ENCODE measurements at regions of chr2 and their contacts with region 1.

Region 1: GRCh38 chr2:151251012-151251411 is 10.7 kb downstream of the RBM43 start:
- DNase-seq: no peak
- ATAC-seq: no peak
- H3K4me3 Mint-ChIP-seq: no peak overlapping the region
- H3K27ac Mint-ChIP-seq: no peak overlapping the region
- H3K4me1 Mint-ChIP-seq: peaks cover 5% of the 10 kb centered on the region
- H3K27me3 Mint-ChIP-seq: no peaks in the 10 kb centered on the region
- CTCF ChIP-seq: no peak

Region 2: DNA sequence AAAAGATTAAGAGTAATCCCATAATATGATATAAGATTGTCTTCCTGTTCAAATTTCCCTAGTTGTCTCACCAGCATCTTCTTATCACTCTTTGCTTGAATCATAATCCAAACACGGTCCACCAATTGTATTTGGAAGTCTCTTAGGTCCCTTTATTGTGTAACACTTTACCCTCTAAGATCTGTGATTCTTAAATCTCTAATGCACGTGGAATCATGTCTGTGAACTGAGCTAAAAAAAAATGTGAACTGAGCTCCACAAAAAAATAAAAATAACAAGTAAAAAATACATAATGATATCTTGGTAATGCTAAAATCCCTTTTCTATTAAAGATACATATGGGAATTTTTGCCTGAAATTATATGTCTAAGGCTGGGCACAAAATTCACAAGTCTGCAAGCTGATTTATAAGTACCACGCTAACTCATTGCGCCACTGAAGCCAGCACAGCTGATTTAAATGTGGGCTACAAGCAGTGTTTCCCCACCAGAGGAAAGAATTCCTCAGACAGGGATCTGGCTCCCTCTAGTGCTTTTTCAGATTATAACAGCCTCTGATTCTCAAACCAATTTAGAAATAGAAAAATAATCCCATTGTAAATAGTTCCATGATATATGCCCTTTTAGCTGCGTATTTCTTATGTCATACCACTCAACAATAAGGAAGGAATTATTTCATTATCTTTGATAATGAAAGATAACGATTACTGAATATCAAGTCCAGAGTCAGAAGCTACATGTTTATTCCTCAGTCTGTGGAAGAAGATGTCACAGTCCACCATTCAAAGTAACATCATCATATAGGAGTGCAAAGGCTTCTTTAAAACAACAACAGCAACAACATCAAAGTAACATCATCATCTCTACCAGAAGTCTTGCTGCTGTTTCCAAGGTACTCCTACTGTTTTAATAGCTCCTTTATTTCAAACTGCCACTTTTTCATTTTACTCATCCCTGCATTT is 12.2 kb before region 1 on chr2:
- CTCF ChIA-PET with region 1: interaction called, 11 read pairs
- POLR2A ChIA-PET with region 1: no interaction called
- intact Hi-C with region 1: no loop called
- DNase-seq: peak; percentile 59
- ATAC-seq: peak; percentile 82
- H3K4me3 Mint-ChIP-seq: no peak overlapping the region
- H3K27ac Mint-ChIP-seq: no peak overlapping the region
- H3K4me1 Mint-ChIP-seq: peaks cover 5% of the 10 kb centered on the region
- H3K27me3 Mint-ChIP-seq: no peaks in the 10 kb centered on the region
- CTCF ChIP-seq: peak; percentile 89

Measured in activated CD8-positive, alpha-beta T cell treated with anti-CD3 and anti-CD28 coated beads for 36 hours (primary cell).